ENCODE measurements at regions of chr11 and their contacts with region 1.

Region 1: GRCh38 chr11:82059505-82059904 is 674.2 kb downstream of the FAM181B start:
- DNase-seq: no peak
- H3K4me3 ChIP-seq: no peak overlapping the region
- H3K27ac ChIP-seq: no peak overlapping the region
- H3K27me3 ChIP-seq: no peaks in the 10 kb centered on the region
- CTCF ChIP-seq: no peak

Region 2: DNA sequence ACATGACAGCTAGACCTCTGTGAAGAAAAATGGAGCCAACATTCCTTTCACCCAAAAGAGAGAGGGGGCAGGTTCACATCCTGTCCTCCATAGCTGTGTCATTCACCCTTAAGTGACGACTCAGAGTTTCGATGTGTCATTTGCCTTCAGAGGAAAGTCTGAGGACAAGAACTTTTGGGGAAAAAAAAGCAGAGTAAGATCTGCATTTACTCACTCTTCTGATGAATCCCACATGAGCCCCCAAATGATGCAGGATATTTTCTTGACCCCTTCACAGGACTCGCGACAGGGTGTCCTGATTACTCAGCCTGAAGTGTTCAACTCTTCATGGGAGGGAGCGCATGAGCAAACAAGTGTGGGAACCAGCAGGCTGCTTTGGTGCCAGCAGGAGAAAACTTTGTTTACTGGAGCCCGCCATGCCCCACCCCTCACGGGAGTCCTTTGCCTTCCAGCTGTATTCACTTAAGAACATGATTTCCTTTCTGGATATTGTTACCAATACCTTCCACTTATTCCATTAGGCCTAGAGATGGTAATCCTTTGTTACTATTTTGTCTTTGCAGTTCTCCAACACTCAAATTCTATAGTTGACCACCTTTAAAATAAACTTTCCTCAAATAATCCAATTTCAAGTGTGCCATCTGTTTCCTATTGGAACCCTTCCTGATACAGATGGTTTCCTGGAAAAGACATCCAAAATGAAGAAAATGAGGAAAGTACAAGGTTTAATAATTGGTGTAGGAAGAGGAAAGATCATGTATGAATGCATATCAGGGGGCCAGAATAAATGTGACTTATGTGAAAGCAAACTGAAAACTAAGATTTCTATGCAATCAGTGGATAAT is 55.6 kb before region 1 on chr11:
- intact Hi-C with region 1: loop called in 1 of 2 experiments (anchors 10 kb)
- DNase-seq: no peak
- H3K4me3 ChIP-seq: no peak overlapping the region
- H3K27ac ChIP-seq: no peak overlapping the region
- H3K27me3 ChIP-seq: peaks cover 0 to 5% (median 0%) of the 10 kb centered on the region in 45 donors
- CTCF ChIP-seq: no peak